CD4-positive, alpha-beta T cell (primary cell): ENCODE measurements at regions of chr19 and their contacts with region 1.

Region 1: DNA sequence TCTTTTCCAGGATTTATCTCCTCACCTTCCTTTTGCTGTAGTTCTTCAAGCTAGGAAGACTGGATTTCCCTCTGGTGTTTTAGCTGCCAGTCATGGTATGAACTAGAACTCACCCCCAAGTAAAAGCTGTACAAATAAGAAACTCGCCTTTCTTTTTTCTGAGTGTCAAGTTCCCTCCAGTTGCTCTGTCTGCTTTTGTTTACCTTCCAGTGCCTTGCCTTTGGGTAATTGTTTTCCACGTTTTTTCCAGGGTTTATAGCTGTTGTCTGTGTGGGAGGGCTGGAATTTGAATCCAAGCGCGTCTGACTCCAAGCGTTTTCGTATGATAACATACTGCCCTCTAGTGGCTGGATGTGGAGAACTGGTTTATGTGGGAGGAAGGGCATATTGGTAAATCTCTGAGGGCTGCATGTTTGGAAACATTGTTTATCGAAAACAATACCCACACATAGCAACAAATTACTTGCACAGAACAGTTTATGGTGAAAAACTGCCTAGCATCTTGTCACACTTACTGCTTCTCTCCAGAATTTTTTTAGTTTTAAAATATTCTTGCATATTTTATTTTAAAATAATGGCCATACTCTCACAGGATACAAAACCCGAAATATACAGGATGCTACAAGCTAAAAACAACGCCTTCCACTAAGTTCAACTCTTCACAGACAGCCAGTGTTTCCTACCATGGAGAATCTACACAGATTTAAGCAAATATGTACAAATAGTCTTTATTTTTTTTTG is 19.2 kb downstream of the RCN3 start:
- DNase-seq: peak in 6 of 14 experiments; percentile 59 to 90 (median 82)
- ATAC-seq: peak; percentile 79
- H3K4me3 ChIP-seq: peak overlapping the region; percentile 30
- H3K4me3 Mint-ChIP-seq: peak overlapping the region; percentile 85
- H3K27ac ChIP-seq: no peak overlapping the region
- H3K27ac Mint-ChIP-seq: peak overlapping the region; percentile 74
- H3K4me1 ChIP-seq: peaks cover 64% of the 10 kb centered on the region
- H3K4me1 Mint-ChIP-seq: peaks cover 54% of the 10 kb centered on the region
- H3K27me3 ChIP-seq: no peaks in the 10 kb centered on the region
- H3K27me3 Mint-ChIP-seq: no peaks in the 10 kb centered on the region
- CTCF ChIP-seq: peak; percentile 93

Region 2: DNA sequence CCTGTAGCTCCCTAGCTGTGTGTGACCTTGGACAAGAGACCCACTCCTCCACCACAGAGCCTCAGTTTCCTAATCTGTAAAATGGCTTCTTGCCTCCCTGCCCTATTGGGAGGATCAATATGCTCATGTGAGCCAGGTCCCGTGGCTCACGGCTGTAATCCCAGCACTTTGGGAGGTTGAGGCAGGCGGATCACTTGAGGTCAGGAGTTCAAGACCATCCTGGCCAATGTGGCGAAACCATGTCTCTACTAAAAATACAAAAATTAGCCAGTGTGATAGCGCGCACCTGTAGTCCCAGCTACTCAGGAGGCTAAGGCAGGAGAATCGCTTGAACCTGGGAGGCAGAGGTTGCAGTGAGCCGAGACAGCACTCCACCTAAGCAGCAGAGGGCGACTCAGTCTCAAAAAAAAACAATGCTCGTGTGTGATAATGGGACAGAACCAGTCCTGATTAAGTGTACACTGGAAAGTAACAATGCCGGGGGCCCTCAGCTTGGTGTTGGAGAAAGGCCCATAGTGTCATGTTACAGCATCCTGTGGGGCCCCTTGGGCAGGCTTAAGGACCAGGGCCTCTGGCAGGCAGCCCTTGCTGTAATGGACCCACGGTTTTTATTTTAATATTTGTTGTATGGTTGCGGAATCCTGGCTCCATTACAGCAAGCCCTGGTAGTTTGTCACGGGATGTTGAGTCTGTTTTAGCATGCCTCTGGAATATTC is 44.0 kb before region 1 on chr19:
- CTCF ChIA-PET with region 1: interaction called, 18 read pairs
- POLR2A ChIA-PET with region 1: interaction called, 9 read pairs
- intact Hi-C with region 1: loop called (anchors 1 kb)
- DNase-seq: peak in 9 of 14 experiments; percentile 39 to 86 (median 56)
- ATAC-seq: no peak
- H3K4me3 ChIP-seq: no peak overlapping the region
- H3K4me3 Mint-ChIP-seq: peak overlapping the region; percentile 81
- H3K27ac ChIP-seq: peak overlapping the region in 1 of 2 donors; percentile 9
- H3K27ac Mint-ChIP-seq: peak overlapping the region; percentile 98
- H3K4me1 ChIP-seq: peaks cover 56% of the 10 kb centered on the region
- H3K4me1 Mint-ChIP-seq: peaks cover 60% of the 10 kb centered on the region
- H3K27me3 ChIP-seq: no peaks in the 10 kb centered on the region
- H3K27me3 Mint-ChIP-seq: no peaks in the 10 kb centered on the region
- CTCF ChIP-seq: peak; percentile 69

Region 3: DNA sequence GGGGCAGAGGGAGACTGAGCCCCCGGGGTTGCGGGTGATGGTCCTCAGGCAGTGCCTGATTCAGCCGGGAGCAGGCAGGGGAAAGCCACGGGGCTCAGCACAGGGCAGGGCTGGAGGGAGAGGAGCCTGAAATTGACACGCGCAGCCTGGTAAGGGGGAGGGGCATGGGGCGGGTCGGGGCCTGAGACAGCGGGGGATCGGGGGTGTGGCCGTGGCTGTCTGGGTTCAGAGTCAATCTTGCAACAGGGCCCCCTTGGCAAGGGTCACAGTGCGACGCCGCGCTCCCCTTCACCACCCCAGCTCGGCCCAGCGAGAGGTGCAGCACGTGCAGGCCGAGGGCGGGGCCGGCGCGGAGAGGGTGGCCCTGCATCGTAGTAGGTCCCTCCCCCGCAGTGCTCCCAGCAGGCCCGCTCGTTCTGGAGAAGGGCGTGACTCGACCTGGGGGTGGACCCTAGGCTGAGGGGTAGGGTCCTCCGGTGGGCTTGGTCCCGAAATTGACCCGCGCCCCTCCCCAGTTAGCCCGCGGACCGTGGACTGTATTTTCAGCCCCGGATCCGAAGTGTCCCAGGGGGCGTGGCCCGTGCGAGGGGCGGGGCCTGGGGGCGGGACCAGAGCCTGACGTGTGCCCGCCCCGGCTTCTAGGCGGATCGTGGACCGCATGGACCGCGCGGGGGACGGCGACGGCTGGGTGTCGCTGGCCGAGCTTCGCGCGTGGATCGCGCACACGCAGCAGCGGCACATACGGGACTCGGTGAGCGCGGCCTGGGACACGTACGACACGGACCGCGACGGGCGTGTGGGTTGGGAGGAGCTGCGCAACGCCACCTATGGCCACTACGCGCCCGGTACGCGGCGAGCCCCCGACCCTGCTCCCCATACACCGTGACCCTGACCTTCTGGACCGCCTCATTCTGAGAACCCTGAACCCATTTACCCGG is 13.2 kb before region 1 on chr19:
- CTCF ChIA-PET with region 1: interaction called, 31 read pairs
- POLR2A ChIA-PET with region 1: interaction called, 19 read pairs
- intact Hi-C with region 1: no loop called
- DNase-seq: peak; percentile 72 to 92 (median 82)
- ATAC-seq: peak; percentile 91
- H3K4me3 ChIP-seq: peak overlapping the region; percentile 70
- H3K4me3 Mint-ChIP-seq: peak overlapping the region; percentile 93
- H3K27ac ChIP-seq: no peak overlapping the region
- H3K27ac Mint-ChIP-seq: peak overlapping the region; percentile 71
- H3K4me1 ChIP-seq: peaks cover 28% of the 10 kb centered on the region
- H3K4me1 Mint-ChIP-seq: peaks cover 27% of the 10 kb centered on the region
- H3K27me3 ChIP-seq: no peaks in the 10 kb centered on the region
- H3K27me3 Mint-ChIP-seq: no peaks in the 10 kb centered on the region
- CTCF ChIP-seq: peak; percentile 38

Region 4: GRCh38 chr19:49565261-49565660 is 18.3 kb after region 1 on chr19:
- CTCF ChIA-PET with region 1: interaction called, 134 read pairs
- POLR2A ChIA-PET with region 1: interaction called, 150 read pairs
- intact Hi-C with region 1: loop called (anchors 1 kb)
- DNase-seq: peak in 4 of 14 experiments; percentile 36 to 72 (median 66)
- ATAC-seq: no peak
- H3K4me3 ChIP-seq: no peak overlapping the region
- H3K4me3 Mint-ChIP-seq: peak overlapping the region; percentile 86
- H3K27ac ChIP-seq: peak overlapping the region; percentile 73 to 77
- H3K27ac Mint-ChIP-seq: peak overlapping the region; percentile 89
- H3K4me1 ChIP-seq: peaks cover 99% of the 10 kb centered on the region
- H3K4me1 Mint-ChIP-seq: peaks cover 81% of the 10 kb centered on the region
- H3K27me3 ChIP-seq: no peaks in the 10 kb centered on the region
- H3K27me3 Mint-ChIP-seq: no peaks in the 10 kb centered on the region
- CTCF ChIP-seq: no peak